A549 (cell line): ENCODE measurements at regions of chr19 and their contacts with region 1.

Region 1: DNA sequence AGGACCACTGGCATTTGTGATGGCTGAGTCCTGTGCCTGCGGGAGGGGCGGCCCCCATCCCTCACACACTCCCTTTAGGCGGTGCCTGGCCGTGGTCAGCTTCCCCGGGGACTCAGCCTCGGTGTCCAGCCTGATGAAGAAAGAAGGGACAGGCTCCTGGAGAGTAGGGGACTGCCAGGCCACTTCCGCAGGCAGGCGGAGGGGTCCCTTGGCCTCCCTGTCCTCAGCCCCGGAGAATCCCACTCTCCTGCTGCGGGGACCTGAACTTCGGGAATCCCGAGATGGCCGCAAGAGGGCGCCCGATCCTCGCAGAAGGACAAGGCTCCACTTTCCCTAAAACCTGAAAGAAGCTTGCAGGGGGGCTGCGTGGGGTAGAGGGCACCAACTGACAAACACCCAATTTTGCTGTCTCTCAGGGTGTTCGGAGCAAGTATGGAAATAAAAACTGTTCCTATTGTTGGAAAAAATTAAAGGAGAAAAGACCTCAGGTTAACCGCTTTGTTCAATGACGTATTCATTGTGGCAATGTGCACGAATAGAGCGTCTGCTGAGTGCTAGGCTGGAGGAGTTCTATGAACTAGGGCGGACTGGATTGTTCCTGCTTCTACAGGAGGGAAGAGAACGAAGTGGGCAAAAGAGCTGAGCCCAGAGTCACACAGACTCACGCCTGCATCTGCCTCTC is 297.3 kb downstream of the ZNF536 start:
- DNase-seq: peak; percentile 61 to 66
- ATAC-seq: peak; percentile 61 to 88
- H3K4me3 ChIP-seq: no peak overlapping the region
- H3K27ac ChIP-seq: no peak overlapping the region
- H3K4me1 ChIP-seq: peaks cover 8% of the 10 kb centered on the region; the same call in 1 of the 3 replicates
- CTCF ChIP-seq: peak; percentile 96
- EP300 ChIP-seq: no peak
- POLR2A ChIP-seq: no peak
- RAD21 ChIP-seq: peak; percentile 88

Region 2: DNA sequence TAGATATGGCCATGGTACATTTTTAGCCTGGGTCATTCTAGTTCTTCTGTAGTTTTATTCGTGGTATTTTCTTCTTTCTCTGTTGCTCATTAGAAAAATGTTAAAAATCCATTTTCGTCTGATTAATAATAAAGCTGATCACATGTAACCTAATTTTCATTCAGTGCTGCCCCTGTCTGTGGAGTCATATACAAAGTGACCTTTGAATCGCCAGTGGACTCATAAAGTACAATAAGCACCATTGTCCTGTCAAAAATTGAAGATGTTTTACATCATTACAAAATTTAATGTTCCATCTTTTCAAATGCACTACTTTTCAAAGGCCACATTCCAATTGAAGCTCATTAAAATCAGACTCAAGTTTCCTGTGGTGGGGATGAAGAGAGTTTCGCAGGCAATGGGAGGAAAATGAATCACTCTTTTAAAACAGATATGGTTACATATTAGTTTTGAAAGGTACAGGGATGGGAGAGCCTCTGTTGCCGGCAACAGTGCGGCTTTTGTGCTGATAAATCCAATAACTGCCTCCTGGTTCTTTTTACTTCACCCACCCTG is 91.8 kb before region 1 on chr19:
- CTCF ChIA-PET with region 1: no interaction called
- POLR2A ChIA-PET with region 1: no interaction called
- DNase-seq: no peak
- ATAC-seq: no peak
- H3K4me3 ChIP-seq: no peak overlapping the region
- H3K27ac ChIP-seq: no peak overlapping the region
- H3K4me1 ChIP-seq: no peaks in the 10 kb centered on the region
- CTCF ChIP-seq: no peak
- EP300 ChIP-seq: no peak
- POLR2A ChIP-seq: no peak
- RAD21 ChIP-seq: no peak

Region 3: DNA sequence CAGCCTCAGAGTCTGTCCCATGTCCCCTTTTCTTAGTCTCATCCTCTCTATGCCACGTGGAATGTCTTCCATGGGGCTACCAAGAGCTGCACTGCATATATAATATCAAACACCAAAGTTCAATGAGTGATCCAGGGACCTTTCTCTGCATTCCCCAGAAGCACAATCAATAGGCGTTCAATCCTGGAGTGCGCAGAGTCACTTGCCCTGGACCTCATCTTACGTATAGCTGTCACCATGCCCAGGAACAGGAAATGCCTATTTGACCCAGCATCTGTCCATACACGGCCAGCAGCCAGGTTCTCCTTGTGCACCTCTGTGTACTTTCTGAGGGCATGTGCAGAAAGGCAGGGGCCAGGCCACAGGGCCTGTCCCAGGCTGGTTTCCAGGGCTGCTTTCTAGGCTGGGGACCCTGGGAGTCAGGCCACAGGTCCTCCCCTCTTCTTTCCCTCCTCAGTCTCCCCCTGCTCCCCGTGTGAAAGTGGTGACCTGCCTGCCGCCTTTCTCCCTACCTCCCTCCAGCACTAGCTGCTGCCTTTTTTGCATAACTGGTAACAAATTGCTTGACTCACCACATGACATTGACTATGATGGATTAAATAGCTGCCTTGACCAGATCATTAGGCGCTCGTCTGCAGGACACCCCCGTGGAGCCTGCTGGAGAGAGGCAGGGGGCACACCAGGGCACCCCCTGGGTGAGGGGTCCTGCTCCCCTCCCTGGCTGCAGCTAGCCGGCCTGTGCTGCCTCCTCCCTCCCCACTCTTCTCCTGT is 75.3 kb before region 1 on chr19:
- CTCF ChIA-PET with region 1: no interaction called
- POLR2A ChIA-PET with region 1: no interaction called
- DNase-seq: no peak
- ATAC-seq: no peak
- H3K4me3 ChIP-seq: no peak overlapping the region
- H3K27ac ChIP-seq: no peak overlapping the region
- H3K4me1 ChIP-seq: no peaks in the 10 kb centered on the region
- CTCF ChIP-seq: no peak
- EP300 ChIP-seq: no peak
- POLR2A ChIP-seq: no peak
- RAD21 ChIP-seq: no peak

Region 4: GRCh38 chr19:30604657-30605056 is 64.8 kb before region 1 on chr19:
- CTCF ChIA-PET with region 1: interaction called, 13 read pairs
- POLR2A ChIA-PET with region 1: no interaction called
- DNase-seq: no peak
- ATAC-seq: no peak
- H3K4me3 ChIP-seq: no peak overlapping the region
- H3K27ac ChIP-seq: no peak overlapping the region
- H3K4me1 ChIP-seq: no peaks in the 10 kb centered on the region
- CTCF ChIP-seq: no peak
- EP300 ChIP-seq: no peak
- POLR2A ChIP-seq: no peak
- RAD21 ChIP-seq: no peak

Region 5: DNA sequence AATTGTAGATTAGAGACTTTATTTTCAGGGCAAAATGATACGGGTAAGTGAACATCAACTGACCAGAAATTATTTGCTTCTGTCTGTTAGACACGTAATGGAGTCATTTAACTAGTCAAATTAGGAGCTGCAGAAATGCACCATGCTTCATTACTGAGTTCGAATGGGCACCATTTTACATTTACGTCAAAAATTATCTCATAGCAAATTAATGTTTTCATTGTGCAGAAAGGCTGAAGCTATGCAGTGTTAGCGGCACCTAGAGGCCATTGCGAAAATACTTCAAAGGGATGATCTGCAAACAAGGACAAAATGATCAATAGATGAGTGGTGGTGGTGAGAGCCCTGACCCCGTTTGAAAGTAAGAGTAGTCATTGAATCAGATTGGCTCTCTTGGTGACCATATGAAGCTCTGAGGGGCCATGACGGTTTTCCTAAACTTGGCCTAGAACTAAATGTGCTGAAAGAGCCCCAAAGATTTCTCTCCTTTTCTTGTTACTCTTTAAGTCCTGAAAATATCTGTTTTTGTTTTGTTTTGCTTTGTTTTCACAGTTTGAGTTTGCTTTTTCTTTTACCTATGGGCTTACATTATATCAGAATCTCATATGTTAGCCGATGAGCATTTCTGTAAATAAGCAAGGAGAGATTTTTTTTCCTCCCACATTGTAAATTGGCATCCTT is 19.4 kb before region 1 on chr19:
- CTCF ChIA-PET with region 1: interaction called, 93 read pairs
- POLR2A ChIA-PET with region 1: no interaction called
- DNase-seq: peak; percentile 72 to 87
- ATAC-seq: peak; percentile 50 to 85; a peak in 5 of 6 replicates
- H3K4me3 ChIP-seq: no peak overlapping the region
- H3K27ac ChIP-seq: no peak overlapping the region
- H3K4me1 ChIP-seq: no peaks in the 10 kb centered on the region
- CTCF ChIP-seq: peak; percentile 99
- EP300 ChIP-seq: no peak
- POLR2A ChIP-seq: no peak
- RAD21 ChIP-seq: peak; percentile 94 to 98

Region 6: GRCh38 chr19:30696514-30696913 is 27.0 kb after region 1 on chr19:
- CTCF ChIA-PET with region 1: interaction called, 51 read pairs
- POLR2A ChIA-PET with region 1: no interaction called
- DNase-seq: peak; percentile 78 to 87
- ATAC-seq: peak; percentile 55 to 94; a peak in 5 of 6 replicates
- H3K4me3 ChIP-seq: no peak overlapping the region
- H3K27ac ChIP-seq: no peak overlapping the region
- H3K4me1 ChIP-seq: no peaks in the 10 kb centered on the region
- CTCF ChIP-seq: peak; percentile 37
- EP300 ChIP-seq: no peak
- POLR2A ChIP-seq: no peak
- RAD21 ChIP-seq: peak in 1 of 2 experiments; percentile 21; a peak in 1 of 5 replicates

Region 7: DNA sequence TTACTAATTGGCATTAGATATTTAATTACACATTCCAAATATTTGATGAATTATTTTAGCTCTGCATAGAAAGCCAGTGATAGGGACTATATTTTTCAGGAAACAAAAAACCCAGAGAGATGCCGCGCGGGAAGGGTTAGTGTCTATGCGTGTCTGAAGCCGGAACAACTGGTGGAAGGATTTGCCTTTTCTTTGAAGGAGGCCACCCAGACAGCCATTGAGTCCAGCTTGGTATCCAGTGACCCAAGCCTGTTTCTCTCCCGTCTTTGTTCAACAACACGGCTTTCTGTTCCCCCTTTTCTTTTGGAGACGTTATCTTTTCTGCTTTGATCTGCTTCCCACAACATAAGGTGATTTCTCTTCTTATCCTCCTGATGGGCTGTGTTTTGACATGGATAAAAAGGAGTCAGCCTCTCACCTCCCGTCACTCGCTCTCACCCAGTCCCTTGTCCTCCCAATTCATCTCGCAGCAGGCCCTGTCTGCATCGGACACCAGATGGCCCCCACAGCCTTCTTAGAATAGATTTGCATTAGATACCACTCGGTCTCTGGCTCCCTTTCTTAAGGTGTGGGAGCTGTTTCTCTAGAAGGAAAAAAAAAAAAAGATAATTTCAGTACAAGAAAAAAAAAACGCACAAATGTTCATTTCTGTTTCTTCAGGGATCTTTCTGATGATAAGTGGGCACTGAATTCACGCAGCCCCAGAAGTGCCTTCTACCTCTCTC is 64.5 kb after region 1 on chr19:
- CTCF ChIA-PET with region 1: no interaction called
- POLR2A ChIA-PET with region 1: no interaction called
- DNase-seq: peak in 1 of 2 experiments; percentile 11
- ATAC-seq: no peak
- H3K4me3 ChIP-seq: no peak overlapping the region
- H3K27ac ChIP-seq: no peak overlapping the region
- H3K4me1 ChIP-seq: no peaks in the 10 kb centered on the region
- CTCF ChIP-seq: no peak
- EP300 ChIP-seq: no peak
- POLR2A ChIP-seq: no peak
- RAD21 ChIP-seq: no peak